Psoas muscle (tissue), 8 donors: ENCODE measurements at regions of chr5 and their contacts with region 1.

Region 1: GRCh38 chr5:177454397-177455035 is 7.9 kb downstream of the PRR7 start:
- DNase-seq: peak; percentile 92 to 96
- ATAC-seq: peak; percentile 71 to 80 (median 76)
- H3K4me3 ChIP-seq: peak overlapping the region; percentile 70
- H3K27ac ChIP-seq: peak overlapping the region; percentile 79
- H3K4me1 ChIP-seq: peaks cover 15% of the 10 kb centered on the region
- H3K27me3 ChIP-seq: peaks cover 0 to 31% (median 0%) of the 10 kb centered on the region in 3 donors
- CTCF ChIP-seq: peak; percentile 91

Region 2: GRCh38 chr5:177311723-177312648 is 142.5 kb before region 1 on chr5 and contains the start of gene MXD3:
- intact Hi-C with region 1: loop called (anchors 2 to 10 kb)
- DNase-seq: peak; percentile 98 to 99
- ATAC-seq: peak; percentile 85 to 94 (median 86)
- H3K4me3 ChIP-seq: peak within 1 kb of the TSS; percentile 73
- H3K27ac ChIP-seq: peak within 1 kb of the TSS; percentile 83
- H3K4me1 ChIP-seq: peaks cover 32% of the 10 kb centered on the region
- H3K27me3 ChIP-seq: no peaks in the 10 kb centered on the region
- CTCF ChIP-seq: no peak
- total RNA-seq, gene MXD3: 2.3 to 4.2 (median 2.8) TPM

Region 3: GRCh38 chr5:177317959-177318377 is 136.5 kb before region 1 on chr5:
- intact Hi-C with region 1: loop called (anchors 2 to 10 kb)
- DNase-seq: peak; percentile 62 to 75
- ATAC-seq: peak; percentile 64 to 77 (median 70)
- H3K4me3 ChIP-seq: no peak overlapping the region
- H3K27ac ChIP-seq: no peak overlapping the region
- H3K4me1 ChIP-seq: peaks cover 2% of the 10 kb centered on the region
- H3K27me3 ChIP-seq: no peaks in the 10 kb centered on the region
- CTCF ChIP-seq: peak; percentile 86

Region 4: DNA sequence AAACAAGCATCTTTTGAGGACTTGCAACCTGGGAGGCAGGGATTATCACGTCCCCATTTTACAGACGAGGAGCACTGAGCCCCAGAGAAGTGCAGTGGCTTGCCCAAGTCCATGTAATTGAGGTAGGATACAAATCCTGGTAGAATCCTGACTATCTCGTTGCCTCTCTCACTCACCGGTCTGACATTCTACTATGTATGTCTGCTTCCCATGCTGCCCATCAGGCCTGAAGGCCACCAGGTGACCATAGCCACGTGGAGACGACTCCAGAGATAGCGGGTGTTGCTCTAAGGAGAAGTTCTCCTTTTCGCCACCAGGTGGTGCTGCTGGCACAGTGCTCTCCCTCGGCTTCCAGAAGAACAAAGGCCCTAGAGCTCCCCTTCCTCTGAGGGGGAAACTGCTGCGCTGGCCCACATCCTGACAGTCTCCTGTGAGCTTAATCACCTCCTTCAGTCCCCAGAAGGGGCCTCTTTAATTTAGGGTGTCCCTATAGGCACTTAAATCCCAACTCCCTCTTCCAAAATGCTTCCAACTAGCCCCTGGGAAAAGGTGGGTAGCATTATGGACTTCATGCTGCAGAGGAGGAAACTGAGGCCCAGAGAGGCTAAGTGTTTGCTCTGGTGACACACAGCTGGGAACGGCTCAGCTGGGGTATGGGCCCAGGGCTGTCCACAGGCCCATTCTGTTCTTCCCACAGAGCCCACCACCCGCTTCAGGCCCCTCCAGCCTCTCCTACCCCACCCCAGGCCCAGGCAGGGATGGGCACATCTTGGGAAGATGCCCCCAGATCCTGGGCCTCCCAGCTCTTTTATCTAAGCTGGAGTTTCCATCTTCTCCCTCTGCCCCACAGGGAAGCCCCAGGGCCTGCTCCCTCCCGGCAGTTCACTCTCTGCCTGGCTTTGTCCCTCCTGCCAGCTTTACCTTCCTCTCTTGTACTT is 63.9 kb before region 1 on chr5:
- intact Hi-C with region 1: loop called (anchors 1 kb)
- DNase-seq: peak; percentile 73 to 82
- ATAC-seq: peak; percentile 87 to 97 (median 94)
- H3K4me3 ChIP-seq: no peak overlapping the region
- H3K27ac ChIP-seq: no peak overlapping the region
- H3K4me1 ChIP-seq: no peaks in the 10 kb centered on the region
- H3K27me3 ChIP-seq: no peaks in the 10 kb centered on the region
- CTCF ChIP-seq: peak; percentile 99

Region 5: GRCh38 chr5:177403792-177404640 is 50.5 kb before region 1 on chr5:
- intact Hi-C with region 1: loop called (anchors 1 kb)
- DNase-seq: peak; percentile 88 to 93
- ATAC-seq: peak; percentile 92 to 98 (median 96)
- H3K4me3 ChIP-seq: peak overlapping the region; percentile 60
- H3K27ac ChIP-seq: no peak overlapping the region
- H3K4me1 ChIP-seq: peaks cover 14% of the 10 kb centered on the region
- H3K27me3 ChIP-seq: peaks cover 0 to 58% (median 35%) of the 10 kb centered on the region in 3 donors
- CTCF ChIP-seq: peak; percentile 73

Region 6: GRCh38 chr5:177500685-177501522 is 46.4 kb after region 1 on chr5:
- intact Hi-C with region 1: loop called (anchors 2 kb)
- DNase-seq: peak; percentile 92 to 96
- ATAC-seq: peak; percentile 32 to 54 (median 34)
- H3K4me3 ChIP-seq: no peak overlapping the region
- H3K27ac ChIP-seq: peak overlapping the region; percentile 3
- H3K4me1 ChIP-seq: no peaks in the 10 kb centered on the region
- H3K27me3 ChIP-seq: no peaks in the 10 kb centered on the region
- CTCF ChIP-seq: peak; percentile 93